ENCODE measurements at regions of chr10 and their contacts with region 1.

Region 1: DNA sequence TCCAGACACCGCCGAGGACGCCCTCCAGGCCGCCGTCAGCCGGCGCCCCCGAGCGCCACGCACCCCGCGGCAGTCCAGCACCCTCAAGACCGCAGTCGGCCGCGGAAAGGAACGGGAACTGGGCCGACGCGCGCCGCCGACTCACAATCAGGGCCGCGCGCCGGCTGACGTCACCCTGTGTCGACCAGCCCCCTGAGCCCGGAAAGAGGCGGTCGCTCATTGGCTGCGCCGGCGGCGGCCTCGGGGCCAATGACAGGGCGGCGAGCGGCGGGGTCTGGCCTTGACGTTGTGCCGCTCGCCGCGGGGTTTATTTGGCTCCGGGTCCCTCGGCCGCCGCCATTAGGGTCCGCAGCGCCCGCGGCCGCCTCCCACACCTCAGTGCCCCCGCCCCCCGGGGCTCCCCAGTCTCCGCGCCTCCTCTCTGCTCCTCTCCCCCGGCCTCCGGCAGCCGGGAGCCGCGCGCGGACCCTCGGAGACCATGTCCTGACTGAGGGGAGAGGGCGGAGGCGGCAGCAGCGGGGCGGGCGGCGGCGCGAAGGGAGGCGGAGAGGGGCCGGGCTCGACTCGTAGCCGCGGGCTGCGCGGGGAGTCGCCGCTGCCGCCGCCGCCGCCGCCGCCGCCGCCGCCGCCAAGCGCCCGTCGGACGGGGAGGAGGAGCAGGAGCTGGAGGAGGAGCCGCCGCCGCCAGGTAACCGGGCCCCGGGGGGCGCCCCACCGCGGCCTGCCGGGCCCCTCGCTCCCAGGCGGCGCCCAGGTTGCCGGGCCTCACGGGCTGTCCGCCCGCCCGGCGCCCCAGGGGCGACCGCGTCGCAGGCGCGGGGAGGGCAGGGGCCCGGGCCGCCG is 25.1 kb upstream of the ZRANB1 start:
- DNase-seq: peak; percentile 93 to 97 (median 96)
- ATAC-seq: peak; percentile 95
- H3K4me3 ChIP-seq: peak overlapping the region; percentile 97
- H3K4me3 Mint-ChIP-seq: peak overlapping the region; percentile 86 to 99 (median 94)
- H3K27ac ChIP-seq: peak overlapping the region; percentile 98
- H3K27ac Mint-ChIP-seq: peak overlapping the region; percentile 89 to 99 (median 94)
- H3K4me1 ChIP-seq: peaks cover 15 to 17% of the 10 kb centered on the region in 2 donors
- H3K4me1 Mint-ChIP-seq: peaks cover 30 to 49% (median 44%) of the 10 kb centered on the region in 7 donors
- H3K27me3 ChIP-seq: no peaks in the 10 kb centered on the region
- H3K27me3 Mint-ChIP-seq: peaks cover 0 to 8% (median 0%) of the 10 kb centered on the region in 5 donors

Region 2: GRCh38 chr10:124231168-124232155 is 685.3 kb before region 1 on chr10:
- CTCF ChIA-PET with region 1: no interaction called
- POLR2A ChIA-PET with region 1: no interaction called
- intact Hi-C with region 1: loop called in 1 of 2 experiments (anchors 5 kb)
- DNase-seq: peak; percentile 14 to 88 (median 70)
- ATAC-seq: peak; percentile 67
- H3K4me3 ChIP-seq: no peak overlapping the region
- H3K4me3 Mint-ChIP-seq: peak overlapping the region in 6 of 10 donors; percentile 19 to 73 (median 52)
- H3K27ac ChIP-seq: no peak overlapping the region
- H3K27ac Mint-ChIP-seq: peak overlapping the region; percentile 22 to 97 (median 83)
- H3K4me1 ChIP-seq: no peaks in the 10 kb centered on the region
- H3K4me1 Mint-ChIP-seq: peaks cover 0 to 13% (median 0%) of the 10 kb centered on the region in 7 donors
- H3K27me3 ChIP-seq: no peaks in the 10 kb centered on the region
- H3K27me3 Mint-ChIP-seq: peaks cover 0 to 19% (median 0%) of the 10 kb centered on the region in 5 donors

Region 3: GRCh38 chr10:124418726-124419501 is 497.9 kb before region 1 on chr10 and contains the start of gene OAT:
- CTCF ChIA-PET with region 1: no interaction called
- POLR2A ChIA-PET with region 1: no interaction called
- intact Hi-C with region 1: loop called (anchors 1 to 2 kb)
- DNase-seq: peak; percentile 90 to 96 (median 94)
- ATAC-seq: peak; percentile 99
- H3K4me3 ChIP-seq: peak within 1 kb of the TSS; percentile 76
- H3K4me3 Mint-ChIP-seq: peak within 1 kb of the TSS; percentile 80 to 91 (median 84)
- H3K27ac ChIP-seq: peak within 1 kb of the TSS; percentile 80
- H3K27ac Mint-ChIP-seq: peak within 1 kb of the TSS in 8 of 9 donors; percentile 31 to 90 (median 83)
- H3K4me1 ChIP-seq: peaks cover 8 to 10% of the 10 kb centered on the region in 2 donors
- H3K4me1 Mint-ChIP-seq: peaks cover 8 to 41% (median 31%) of the 10 kb centered on the region in 7 donors
- H3K27me3 ChIP-seq: no peaks in the 10 kb centered on the region
- H3K27me3 Mint-ChIP-seq: peaks cover 0 to 18% (median 2%) of the 10 kb centered on the region in 5 donors
- total RNA-seq, gene OAT: 29.6 to 47.0 (median 39.1) TPM

Region 4: DNA sequence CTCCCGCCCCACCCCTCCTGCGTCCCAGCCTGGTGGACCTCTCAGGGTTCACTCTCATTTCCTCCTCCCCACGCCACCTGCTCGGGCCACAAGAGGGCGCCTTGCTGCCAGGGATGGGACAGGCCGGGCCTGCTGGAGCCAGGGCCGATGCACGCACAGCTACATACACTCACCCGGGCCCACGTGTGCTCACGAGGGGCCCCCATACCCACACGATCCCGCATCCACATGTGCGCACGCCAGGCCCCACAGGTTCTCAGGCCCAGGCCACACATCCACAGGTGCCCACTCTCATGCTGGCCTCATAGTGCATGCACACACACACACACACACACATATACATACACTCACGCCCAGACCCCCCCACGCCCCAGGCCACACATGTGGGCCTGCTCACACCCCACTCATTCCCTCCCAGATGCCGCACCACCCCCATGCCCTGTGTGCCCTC is 386.6 kb before region 1 on chr10:
- CTCF ChIA-PET with region 1: no interaction called
- POLR2A ChIA-PET with region 1: no interaction called
- intact Hi-C with region 1: loop called in 1 of 2 experiments (anchors 2 kb)
- DNase-seq: peak; percentile 68 to 87 (median 80)
- ATAC-seq: peak; percentile 95
- H3K4me3 ChIP-seq: no peak overlapping the region
- H3K4me3 Mint-ChIP-seq: peak overlapping the region in 3 of 10 donors; percentile 18 to 59 (median 21)
- H3K27ac ChIP-seq: no peak overlapping the region
- H3K27ac Mint-ChIP-seq: peak overlapping the region in 3 of 9 donors; percentile 14 to 53 (median 38)
- H3K4me1 ChIP-seq: no peaks in the 10 kb centered on the region
- H3K4me1 Mint-ChIP-seq: peaks cover 3 to 16% (median 5%) of the 10 kb centered on the region in 7 donors
- H3K27me3 ChIP-seq: no peaks in the 10 kb centered on the region
- H3K27me3 Mint-ChIP-seq: peaks cover 0 to 7% (median 0%) of the 10 kb centered on the region in 5 donors

Region 5: DNA sequence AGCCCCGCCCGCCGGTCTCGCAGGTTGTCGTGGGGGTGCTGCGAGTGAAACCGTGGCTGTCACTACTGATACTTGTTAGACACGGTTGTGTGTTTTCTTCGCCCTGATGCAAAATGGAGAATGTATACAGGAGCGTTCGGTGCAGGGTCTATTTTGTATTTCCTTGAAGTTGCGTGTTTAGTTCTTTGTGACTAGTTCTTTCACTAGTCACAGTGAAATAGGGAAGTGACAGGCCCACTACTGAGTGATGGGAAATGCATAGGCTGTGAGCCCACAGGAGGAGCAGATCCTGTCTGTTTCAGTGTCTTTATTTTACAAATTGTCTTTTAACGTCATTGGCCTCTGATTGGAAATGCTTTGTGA is 114.5 kb before region 1 on chr10:
- CTCF ChIA-PET with region 1: no interaction called
- POLR2A ChIA-PET with region 1: interaction called, 5 read pairs
- intact Hi-C with region 1: loop called (anchors 1 to 2 kb)
- DNase-seq: peak in 1 of 9 donors; percentile 16
- ATAC-seq: peak; percentile 28
- H3K4me3 ChIP-seq: peak overlapping the region; percentile 97
- H3K4me3 Mint-ChIP-seq: peak overlapping the region; percentile 85 to 96 (median 88)
- H3K27ac ChIP-seq: peak overlapping the region; percentile 90
- H3K27ac Mint-ChIP-seq: peak overlapping the region; percentile 55 to 95 (median 88)
- H3K4me1 ChIP-seq: peaks cover 0 to 5% of the 10 kb centered on the region in 2 donors
- H3K4me1 Mint-ChIP-seq: peaks cover 9 to 24% (median 17%) of the 10 kb centered on the region in 7 donors
- H3K27me3 ChIP-seq: no peaks in the 10 kb centered on the region
- H3K27me3 Mint-ChIP-seq: peaks cover 0 to 12% (median 4%) of the 10 kb centered on the region in 5 donors

Region 6: GRCh38 chr10:125549653-125550052 is 632.8 kb after region 1 on chr10:
- CTCF ChIA-PET with region 1: no interaction called
- POLR2A ChIA-PET with region 1: no interaction called
- intact Hi-C with region 1: no loop called
- DNase-seq: no peak
- ATAC-seq: no peak
- H3K4me3 ChIP-seq: no peak overlapping the region
- H3K4me3 Mint-ChIP-seq: no peak overlapping the region
- H3K27ac ChIP-seq: no peak overlapping the region
- H3K27ac Mint-ChIP-seq: no peak overlapping the region
- H3K4me1 ChIP-seq: no peaks in the 10 kb centered on the region
- H3K4me1 Mint-ChIP-seq: no peaks in the 10 kb centered on the region
- H3K27me3 ChIP-seq: no peaks in the 10 kb centered on the region
- H3K27me3 Mint-ChIP-seq: peaks cover 0 to 21% (median 18%) of the 10 kb centered on the region in 5 donors

Region 7: DNA sequence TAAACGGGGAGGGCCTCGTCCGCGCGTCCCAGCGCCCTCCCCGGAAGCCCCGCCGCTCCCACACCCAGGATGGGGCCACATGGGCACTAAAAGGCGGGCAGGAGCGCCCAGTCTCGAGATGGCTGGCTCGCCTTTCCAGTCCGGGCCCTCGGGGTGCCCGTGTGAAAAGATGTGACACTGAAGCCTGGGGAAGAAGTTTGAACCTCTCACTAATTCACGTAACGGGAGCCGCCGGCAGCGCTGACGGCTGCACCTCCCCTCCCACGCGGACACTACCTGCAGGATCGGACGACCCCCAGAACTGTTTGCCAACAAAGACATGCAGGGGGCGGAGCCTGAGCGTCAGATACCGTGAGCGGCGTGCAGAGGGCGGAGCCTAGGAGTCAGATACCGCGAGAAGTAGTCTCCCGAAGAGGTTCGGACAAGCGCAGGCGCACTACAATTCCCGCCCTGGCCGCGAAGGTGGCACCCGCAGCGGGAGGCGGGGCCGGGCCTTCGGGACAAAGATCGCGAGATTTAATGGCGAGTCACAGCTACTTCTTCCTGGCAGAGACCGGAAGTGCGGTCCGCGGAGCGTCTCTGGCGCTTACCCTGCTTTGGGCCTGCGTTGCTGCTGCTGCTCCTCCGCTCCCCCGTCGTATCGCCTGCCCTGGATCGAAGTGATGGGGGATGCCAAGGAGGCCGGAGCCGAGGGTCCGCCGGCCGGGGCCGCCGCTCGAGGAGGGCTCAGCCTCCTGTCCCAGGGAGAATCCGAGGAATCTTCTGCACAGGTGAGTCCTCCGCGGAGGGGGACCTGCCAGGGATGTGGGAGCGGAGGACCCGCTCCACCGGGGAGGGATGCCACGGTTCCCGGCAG is 802.6 kb after region 1 on chr10 and contains the start of gene EDRF1:
- CTCF ChIA-PET with region 1: no interaction called
- POLR2A ChIA-PET with region 1: no interaction called
- intact Hi-C with region 1: loop called (anchors 1 kb)
- DNase-seq: peak; percentile 96 to 100 (median 99)
- ATAC-seq: peak; percentile 97
- H3K4me3 ChIP-seq: peak within 1 kb of the TSS; percentile 95
- H3K4me3 Mint-ChIP-seq: peak within 1 kb of the TSS; percentile 89 to 99 (median 98)
- H3K27ac ChIP-seq: peak within 1 kb of the TSS; percentile 94
- H3K27ac Mint-ChIP-seq: peak within 1 kb of the TSS; percentile 96 to 99 (median 97)
- H3K4me1 ChIP-seq: peaks cover 20 to 24% of the 10 kb centered on the region in 2 donors
- H3K4me1 Mint-ChIP-seq: peaks cover 6 to 47% (median 39%) of the 10 kb centered on the region in 7 donors
- H3K27me3 ChIP-seq: no peaks in the 10 kb centered on the region
- H3K27me3 Mint-ChIP-seq: peaks cover 0 to 3% (median 0%) of the 10 kb centered on the region in 5 donors
- total RNA-seq, gene EDRF1: 33.8 to 64.4 (median 53.8) TPM

Measured in naive thymus-derived CD4-positive, alpha-beta T cell (primary cell).